Activated CD8-positive, alpha-beta T cell treated with anti-CD3 and anti-CD28 coated beads for 36 hours (primary cell): ENCODE measurements at regions of chr14 and their contacts with region 1.

Region 1: DNA sequence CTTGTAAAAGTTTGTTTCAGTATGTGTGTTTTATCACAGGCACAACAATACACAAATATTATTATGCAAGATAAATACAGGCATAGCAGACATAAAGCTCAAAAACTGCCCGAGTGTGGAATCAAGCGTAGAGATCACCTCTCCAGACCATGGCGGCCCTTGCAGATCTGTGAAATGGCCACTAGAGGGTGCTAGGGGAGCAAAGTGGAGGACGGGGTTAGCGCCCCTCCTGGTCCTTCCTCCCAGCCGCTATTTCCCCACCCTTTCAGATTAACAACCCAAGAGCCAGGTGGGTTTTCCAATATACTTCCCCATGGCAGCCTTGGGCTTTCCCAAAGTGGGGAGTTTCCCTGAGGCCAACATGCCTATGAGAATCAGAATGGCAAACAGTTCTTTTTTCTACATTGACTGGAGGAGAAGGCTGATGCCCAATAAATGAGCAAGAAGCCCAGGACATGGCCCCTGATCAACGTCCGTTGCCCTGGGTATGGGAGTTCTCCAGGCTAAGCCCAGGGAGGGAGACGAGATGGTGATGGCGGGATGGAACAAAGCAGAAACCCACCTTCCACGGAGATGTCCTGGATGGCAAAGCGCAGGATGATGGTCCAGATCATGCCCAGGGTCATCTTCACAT is 67.4 kb downstream of the ACTN1 start:
- DNase-seq: peak; percentile 86
- ATAC-seq: peak; percentile 89
- H3K4me3 Mint-ChIP-seq: no peak overlapping the region
- H3K27ac Mint-ChIP-seq: peak overlapping the region; percentile 81
- H3K4me1 Mint-ChIP-seq: peaks cover 51% of the 10 kb centered on the region
- H3K27me3 Mint-ChIP-seq: no peaks in the 10 kb centered on the region
- CTCF ChIP-seq: peak; percentile 99

Region 2: GRCh38 chr14:68834816-68835215 is 76.9 kb before region 1 on chr14:
- CTCF ChIA-PET with region 1: no interaction called
- POLR2A ChIA-PET with region 1: no interaction called
- intact Hi-C with region 1: no loop called
- DNase-seq: no peak
- ATAC-seq: no peak
- H3K4me3 Mint-ChIP-seq: no peak overlapping the region
- H3K27ac Mint-ChIP-seq: no peak overlapping the region
- H3K4me1 Mint-ChIP-seq: peaks cover 3% of the 10 kb centered on the region
- H3K27me3 Mint-ChIP-seq: no peaks in the 10 kb centered on the region
- CTCF ChIP-seq: no peak

Region 3: GRCh38 chr14:68896132-68896531 is 15.6 kb before region 1 on chr14:
- CTCF ChIA-PET with region 1: interaction called, 26 read pairs
- POLR2A ChIA-PET with region 1: interaction called, 3 read pairs
- intact Hi-C with region 1: no loop called
- DNase-seq: no peak
- ATAC-seq: no peak
- H3K4me3 Mint-ChIP-seq: no peak overlapping the region
- H3K27ac Mint-ChIP-seq: no peak overlapping the region
- H3K4me1 Mint-ChIP-seq: peaks cover 47% of the 10 kb centered on the region
- H3K27me3 Mint-ChIP-seq: no peaks in the 10 kb centered on the region
- CTCF ChIP-seq: no peak

Region 4: GRCh38 chr14:68955164-68955921 is 43.6 kb after region 1 on chr14:
- CTCF ChIA-PET with region 1: interaction called, 13 read pairs
- POLR2A ChIA-PET with region 1: no interaction called
- intact Hi-C with region 1: no loop called
- DNase-seq: no peak
- ATAC-seq: peak; percentile 17
- H3K4me3 Mint-ChIP-seq: peak overlapping the region; percentile 37
- H3K27ac Mint-ChIP-seq: peak overlapping the region; percentile 87
- H3K4me1 Mint-ChIP-seq: peaks cover 91% of the 10 kb centered on the region
- H3K27me3 Mint-ChIP-seq: no peaks in the 10 kb centered on the region
- CTCF ChIP-seq: no peak

Region 5: DNA sequence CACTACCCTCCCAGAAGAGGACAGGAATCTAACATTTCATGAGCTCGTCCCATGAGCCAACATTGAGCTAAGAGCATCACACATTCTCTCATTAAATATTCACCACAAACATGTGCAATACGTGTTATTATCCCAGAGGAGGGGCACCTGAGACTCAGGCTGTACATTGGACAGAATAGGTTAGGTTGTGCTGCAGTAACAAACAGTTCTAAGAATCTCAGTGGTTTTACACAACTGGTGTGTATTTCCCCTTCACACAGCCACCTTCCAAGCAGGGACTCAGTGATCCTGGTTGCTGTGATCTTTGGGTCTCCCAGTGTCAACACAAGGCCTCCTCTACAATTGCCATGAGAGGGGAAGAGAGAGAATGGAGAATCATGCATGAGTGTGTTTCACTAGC is 82.3 kb after region 1 on chr14:
- CTCF ChIA-PET with region 1: interaction called, 29 read pairs
- POLR2A ChIA-PET with region 1: interaction called, 3 read pairs
- intact Hi-C with region 1: no loop called
- DNase-seq: no peak
- ATAC-seq: no peak
- H3K4me3 Mint-ChIP-seq: no peak overlapping the region
- H3K27ac Mint-ChIP-seq: no peak overlapping the region
- H3K4me1 Mint-ChIP-seq: peaks cover 11% of the 10 kb centered on the region
- H3K27me3 Mint-ChIP-seq: no peaks in the 10 kb centered on the region
- CTCF ChIP-seq: no peak

Region 6: DNA sequence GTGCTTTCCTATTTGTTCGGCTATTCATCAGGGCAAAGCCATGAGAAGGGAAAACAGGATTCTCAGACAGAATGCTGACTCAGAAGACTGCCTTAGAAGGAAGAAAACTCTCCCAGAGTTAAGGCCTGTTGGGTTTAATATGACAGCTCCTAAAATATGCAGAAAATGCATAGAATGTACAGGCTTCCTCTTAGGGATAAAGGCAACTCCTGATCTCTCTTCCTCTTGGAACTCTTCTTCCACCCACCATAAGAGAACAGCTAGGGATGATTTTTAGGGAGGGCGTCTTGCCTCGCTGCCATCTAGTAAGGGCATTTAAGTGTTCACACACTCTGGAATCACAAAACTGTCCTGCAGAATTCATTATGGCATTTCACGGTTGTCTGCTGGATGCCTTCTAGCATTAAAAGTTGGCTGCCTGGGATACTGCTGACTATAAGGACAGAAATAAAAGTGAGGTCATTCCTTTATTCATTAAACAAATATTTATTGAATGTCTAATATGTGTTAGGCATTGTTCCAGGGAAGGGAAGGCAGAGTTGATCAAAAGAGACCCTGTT is 167.6 kb after region 1 on chr14:
- CTCF ChIA-PET with region 1: interaction called, 20 read pairs
- POLR2A ChIA-PET with region 1: no interaction called
- intact Hi-C with region 1: no loop called
- DNase-seq: no peak
- ATAC-seq: no peak
- H3K4me3 Mint-ChIP-seq: no peak overlapping the region
- H3K27ac Mint-ChIP-seq: no peak overlapping the region
- H3K4me1 Mint-ChIP-seq: peaks cover 35% of the 10 kb centered on the region
- H3K27me3 Mint-ChIP-seq: no peaks in the 10 kb centered on the region
- CTCF ChIP-seq: no peak

Region 7: GRCh38 chr14:69107407-69108003 is 195.8 kb after region 1 on chr14:
- CTCF ChIA-PET with region 1: interaction called, 49 read pairs
- POLR2A ChIA-PET with region 1: interaction called, 3 read pairs
- intact Hi-C with region 1: no loop called
- DNase-seq: peak; percentile 46
- ATAC-seq: peak; percentile 75
- H3K4me3 Mint-ChIP-seq: no peak overlapping the region
- H3K27ac Mint-ChIP-seq: peak overlapping the region; percentile 19
- H3K4me1 Mint-ChIP-seq: peaks cover 5% of the 10 kb centered on the region
- H3K27me3 Mint-ChIP-seq: no peaks in the 10 kb centered on the region
- CTCF ChIP-seq: peak; percentile 67